HCT116 (cell line): ENCODE measurements at regions of chr2 and their contacts with region 1.

Region 1: GRCh38 chr2:88055371-88056128 is at the start of gene KRCC1:
- DNase-seq: peak; percentile 92
- ATAC-seq: peak; percentile 93
- H3K4me3 ChIP-seq: peak within 1 kb of the TSS; percentile 82 to 91
- H3K27ac ChIP-seq: peak within 1 kb of the TSS; percentile 92
- H3K4me1 ChIP-seq: peaks cover 7 to 21% of the 10 kb centered on the region in 2 experiments; a peak in 3 of 4 replicates
- H3K27me3 ChIP-seq: no peaks in the 10 kb centered on the region
- CTCF ChIP-seq: no peak
- POLR2A ChIP-seq: peak; percentile 88
- RAD21 ChIP-seq: no peak
- total RNA-seq, gene KRCC1: 5.8 TPM

Region 2: DNA sequence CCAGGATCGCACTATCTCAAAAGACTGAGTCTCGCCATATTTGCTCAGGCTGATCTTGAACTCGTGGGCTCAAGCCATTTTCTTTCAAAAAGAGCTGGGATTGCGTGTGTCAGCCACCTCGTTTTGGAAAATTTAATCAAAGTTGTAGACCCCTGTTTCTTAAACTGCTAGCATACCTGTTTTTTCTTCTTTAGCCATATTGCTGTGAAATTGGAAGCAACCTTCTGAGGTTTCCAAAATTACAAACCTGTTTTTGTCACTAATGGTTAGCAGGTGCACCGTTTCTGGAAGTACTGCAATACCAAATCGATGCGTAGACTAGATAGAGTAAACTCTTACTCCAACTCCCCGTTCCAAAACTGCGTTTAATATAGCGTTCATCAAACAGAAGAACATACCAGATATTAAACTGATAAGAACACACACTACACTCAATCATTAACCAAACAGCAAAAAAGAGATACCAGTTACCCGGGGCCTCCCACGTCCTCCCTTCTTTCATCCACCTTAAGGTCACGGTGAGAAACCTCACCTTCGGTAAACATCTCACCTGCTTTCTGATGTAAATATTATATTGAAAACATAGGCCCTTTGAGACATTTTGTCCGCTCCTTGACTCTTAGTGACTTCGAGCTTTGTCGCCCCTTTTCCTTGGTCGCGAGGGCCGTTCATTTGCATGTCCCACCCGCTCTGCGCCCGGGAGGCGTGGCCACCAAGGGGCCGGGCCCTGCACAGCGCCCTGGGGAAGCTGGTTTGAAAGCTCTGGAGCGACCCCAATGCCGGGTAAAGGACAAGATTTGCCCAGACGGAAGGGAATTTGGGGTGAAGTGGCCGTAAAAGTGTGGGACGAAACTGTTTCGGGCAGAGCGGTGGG is 39.2 kb before region 1 on chr2 and contains the start of gene RNU2-63P:
- CTCF ChIA-PET with region 1: interaction called, 3 read pairs
- POLR2A ChIA-PET with region 1: interaction called, 11 read pairs
- RAD21 ChIA-PET with region 1: no interaction called
- intact Hi-C with region 1: no loop called
- DNase-seq: peak; percentile 94
- ATAC-seq: peak; percentile 84
- H3K4me3 ChIP-seq: peak within 1 kb of the TSS; percentile 64 to 65
- H3K27ac ChIP-seq: peak within 1 kb of the TSS; percentile 74
- H3K4me1 ChIP-seq: peaks cover 0 to 18% of the 10 kb centered on the region in 2 experiments; a peak in 3 of 4 replicates
- H3K27me3 ChIP-seq: no peaks in the 10 kb centered on the region
- CTCF ChIP-seq: no peak
- POLR2A ChIP-seq: peak; percentile 100
- RAD21 ChIP-seq: no peak; the same call in 1 of the 2 replicates
- total RNA-seq, gene RNU2-63P: 7.4 TPM

Region 3: DNA sequence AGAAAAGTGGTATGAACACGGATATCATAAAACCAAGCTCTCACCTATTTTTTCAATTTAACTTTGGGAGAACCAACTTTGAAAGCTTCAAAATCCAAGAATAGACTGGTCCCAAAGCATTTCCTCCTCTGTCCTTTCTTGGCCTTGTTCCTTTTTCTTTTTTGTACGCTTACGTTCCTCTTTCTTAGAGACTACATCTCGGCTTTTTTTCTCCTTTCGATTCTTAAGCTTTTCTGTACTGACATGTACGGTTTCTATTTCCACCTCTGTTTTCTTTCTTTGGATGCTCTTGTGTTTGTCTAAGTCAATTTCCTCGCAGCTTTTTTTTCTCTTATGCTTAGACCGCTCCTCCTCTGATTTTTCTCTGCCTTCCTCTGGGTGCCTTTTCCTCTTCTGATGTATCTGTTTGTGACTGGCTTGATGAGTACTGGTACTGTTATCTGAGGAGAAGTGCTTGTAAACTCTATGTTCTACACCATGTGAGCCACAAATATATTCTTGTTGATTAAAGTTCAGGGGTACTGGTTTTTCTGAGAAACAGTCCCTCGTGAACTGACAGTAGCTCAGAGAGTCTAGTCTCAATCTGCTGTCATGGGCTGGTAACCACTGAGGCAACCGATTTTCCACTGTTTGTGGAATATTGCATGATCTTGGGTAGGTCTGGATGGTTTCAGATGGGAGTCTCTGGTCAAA is 27.7 kb before region 1 on chr2:
- CTCF ChIA-PET with region 1: no interaction called
- POLR2A ChIA-PET with region 1: no interaction called
- RAD21 ChIA-PET with region 1: no interaction called
- intact Hi-C with region 1: no loop called
- DNase-seq: no peak
- ATAC-seq: no peak
- H3K4me3 ChIP-seq: no peak overlapping the region
- H3K27ac ChIP-seq: no peak overlapping the region
- H3K4me1 ChIP-seq: no peaks in the 10 kb centered on the region
- H3K27me3 ChIP-seq: no peaks in the 10 kb centered on the region
- CTCF ChIP-seq: no peak
- POLR2A ChIP-seq: no peak
- RAD21 ChIP-seq: no peak

Region 4: DNA sequence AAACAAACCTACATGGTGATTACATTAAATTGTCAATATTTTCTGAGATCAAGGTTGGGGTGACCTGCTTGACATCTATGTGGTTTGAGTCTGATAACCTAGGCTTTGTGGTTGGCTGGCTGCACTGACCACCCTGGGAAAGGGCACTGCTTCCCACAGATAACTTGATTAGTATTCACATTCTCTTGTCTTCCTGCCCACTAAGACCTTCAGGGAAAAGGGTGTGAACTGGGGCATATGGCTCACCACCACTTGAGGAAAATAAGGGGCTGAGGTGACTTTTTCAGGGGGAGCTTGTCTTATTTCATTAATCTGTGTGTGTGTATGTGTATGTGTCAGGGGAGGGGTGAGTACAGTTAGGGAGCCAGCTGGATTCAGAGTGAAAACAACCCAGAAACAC is 13.6 kb after region 1 on chr2:
- CTCF ChIA-PET with region 1: interaction called, 11 read pairs
- POLR2A ChIA-PET with region 1: no interaction called
- RAD21 ChIA-PET with region 1: no interaction called
- intact Hi-C with region 1: no loop called
- DNase-seq: no peak
- ATAC-seq: no peak
- H3K4me3 ChIP-seq: no peak overlapping the region
- H3K27ac ChIP-seq: no peak overlapping the region
- H3K4me1 ChIP-seq: no peaks in the 10 kb centered on the region
- H3K27me3 ChIP-seq: no peaks in the 10 kb centered on the region
- CTCF ChIP-seq: no peak
- POLR2A ChIP-seq: no peak
- RAD21 ChIP-seq: no peak

Region 5: DNA sequence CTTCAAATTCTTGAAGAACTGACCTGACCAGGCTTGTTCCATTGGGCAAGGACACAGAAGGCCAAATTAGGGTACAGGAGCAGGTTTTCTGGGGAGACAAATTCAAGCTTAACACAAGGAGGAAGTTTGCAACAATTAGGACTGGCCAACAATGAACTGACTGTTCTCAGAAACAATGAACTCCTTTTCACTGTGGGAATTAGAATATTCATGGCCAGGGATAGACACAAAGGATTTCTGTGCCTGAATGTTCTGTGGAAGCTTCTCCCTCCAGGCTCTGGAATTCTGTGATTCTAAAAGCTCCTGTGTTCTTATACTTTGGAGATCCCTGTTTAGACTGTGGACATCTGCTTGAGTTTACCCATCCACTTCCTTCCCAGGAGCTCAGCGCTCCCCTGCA is 27.2 kb after region 1 on chr2:
- CTCF ChIA-PET with region 1: interaction called, 12 read pairs
- POLR2A ChIA-PET with region 1: no interaction called
- RAD21 ChIA-PET with region 1: no interaction called
- intact Hi-C with region 1: no loop called
- DNase-seq: no peak
- ATAC-seq: no peak
- H3K4me3 ChIP-seq: no peak overlapping the region
- H3K27ac ChIP-seq: no peak overlapping the region
- H3K4me1 ChIP-seq: peaks cover 0 to 5% of the 10 kb centered on the region in 2 experiments; a peak in 1 of 4 replicates
- H3K27me3 ChIP-seq: no peaks in the 10 kb centered on the region
- CTCF ChIP-seq: no peak
- POLR2A ChIP-seq: no peak
- RAD21 ChIP-seq: no peak

Region 6: GRCh38 chr2:88159955-88160415 is 104.4 kb after region 1 on chr2:
- CTCF ChIA-PET with region 1: interaction called, 113 read pairs
- POLR2A ChIA-PET with region 1: no interaction called
- RAD21 ChIA-PET with region 1: interaction called, 13 to 15 read pairs
- intact Hi-C with region 1: loop called (anchors 1 kb)
- DNase-seq: peak; percentile 52
- ATAC-seq: peak; percentile 91
- H3K4me3 ChIP-seq: no peak overlapping the region
- H3K27ac ChIP-seq: no peak overlapping the region
- H3K4me1 ChIP-seq: no peaks in the 10 kb centered on the region; a peak in 1 of 4 replicates
- H3K27me3 ChIP-seq: no peaks in the 10 kb centered on the region
- CTCF ChIP-seq: peak; percentile 74 to 89 (median 75)
- POLR2A ChIP-seq: no peak
- RAD21 ChIP-seq: peak; percentile 83

Region 7: GRCh38 chr2:88187038-88187676 is 131.6 kb after region 1 on chr2:
- CTCF ChIA-PET with region 1: interaction called, 19 read pairs
- POLR2A ChIA-PET with region 1: no interaction called
- RAD21 ChIA-PET with region 1: interaction called in 1 of 2 experiments, 3 read pairs
- intact Hi-C with region 1: loop called (anchors 1 kb)
- DNase-seq: peak; percentile 61
- ATAC-seq: peak; percentile 87
- H3K4me3 ChIP-seq: no peak overlapping the region
- H3K27ac ChIP-seq: no peak overlapping the region
- H3K4me1 ChIP-seq: peaks cover 0 to 7% of the 10 kb centered on the region in 2 experiments; a peak in 1 of 4 replicates
- H3K27me3 ChIP-seq: peaks cover 6% of the 10 kb centered on the region; the same call in 1 of the 2 replicates
- CTCF ChIP-seq: peak; percentile 81 to 93 (median 83)
- POLR2A ChIP-seq: no peak
- RAD21 ChIP-seq: peak; percentile 87

Region 8: GRCh38 chr2:88265349-88266303 is 210.1 kb after region 1 on chr2:
- CTCF ChIA-PET with region 1: no interaction called
- POLR2A ChIA-PET with region 1: no interaction called
- RAD21 ChIA-PET with region 1: no interaction called
- intact Hi-C with region 1: no loop called
- DNase-seq: peak; percentile 79
- ATAC-seq: peak; percentile 94
- H3K4me3 ChIP-seq: 0 out of 4 replicates have a peak overlapping the region, but pooled peaks of 1 of the 2 experiments have one; percentile 7
- H3K27ac ChIP-seq: no peak overlapping the region
- H3K4me1 ChIP-seq: peaks cover 7 to 12% of the 10 kb centered on the region in 2 experiments; a peak in 3 of 4 replicates
- H3K27me3 ChIP-seq: no peaks in the 10 kb centered on the region
- CTCF ChIP-seq: no peak
- POLR2A ChIP-seq: no peak
- RAD21 ChIP-seq: no peak

Region 9: DNA sequence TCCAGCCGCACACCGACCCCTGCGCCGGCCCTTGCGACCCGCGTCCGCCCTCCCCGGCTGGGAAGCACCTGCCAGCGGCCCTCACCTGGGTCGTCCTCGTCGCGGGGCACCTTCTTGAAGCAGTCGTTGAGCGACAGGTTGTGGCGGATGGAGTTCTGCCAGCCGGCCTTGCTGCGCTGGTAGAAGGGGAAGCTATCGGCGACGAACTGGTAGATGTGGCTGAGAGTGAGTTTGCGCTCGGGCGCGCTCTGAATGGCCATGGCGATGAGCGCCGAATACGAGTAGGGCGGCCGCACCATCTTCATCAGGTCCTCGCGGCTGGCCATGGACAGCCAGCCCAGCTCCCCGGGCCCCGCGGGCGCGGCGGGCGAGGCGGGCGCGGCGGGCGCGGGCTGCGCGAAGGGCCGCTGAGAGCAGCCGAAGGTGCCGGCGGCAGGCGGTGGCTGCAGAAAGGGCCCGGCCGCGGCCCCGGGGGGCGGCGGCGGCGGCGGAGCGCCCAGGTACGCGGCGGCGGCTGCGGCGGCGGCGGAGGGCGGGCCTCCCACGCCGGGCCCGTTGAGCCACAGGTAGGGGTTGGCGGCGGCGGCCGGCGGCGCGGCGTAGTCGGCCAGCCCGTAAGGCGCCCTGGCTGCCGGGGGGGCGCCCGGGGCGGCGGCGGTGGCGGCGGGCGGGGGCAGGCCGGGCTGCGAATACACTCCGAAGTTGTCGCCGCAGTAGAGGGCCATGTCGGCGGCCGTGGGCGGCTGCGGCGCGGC is 396.4 kb after region 1 on chr2:
- CTCF ChIA-PET with region 1: interaction called, 6 read pairs
- POLR2A ChIA-PET with region 1: no interaction called
- RAD21 ChIA-PET with region 1: no interaction called
- intact Hi-C with region 1: loop called (anchors 10 kb)
- DNase-seq: no peak
- ATAC-seq: no peak
- H3K4me3 ChIP-seq: no peak overlapping the region
- H3K27ac ChIP-seq: no peak overlapping the region
- H3K4me1 ChIP-seq: no peaks in the 10 kb centered on the region; a peak in 1 of 4 replicates
- H3K27me3 ChIP-seq: no peaks in the 10 kb centered on the region
- CTCF ChIP-seq: no peak
- POLR2A ChIP-seq: no peak
- RAD21 ChIP-seq: no peak

Region 10: GRCh38 chr2:88540346-88540745 is 484.8 kb after region 1 on chr2:
- CTCF ChIA-PET with region 1: no interaction called
- POLR2A ChIA-PET with region 1: no interaction called
- RAD21 ChIA-PET with region 1: no interaction called
- intact Hi-C with region 1: no loop called
- DNase-seq: no peak
- ATAC-seq: no peak
- H3K4me3 ChIP-seq: no peak overlapping the region
- H3K27ac ChIP-seq: no peak overlapping the region
- H3K4me1 ChIP-seq: peaks cover 0 to 24% of the 10 kb centered on the region in 2 experiments; a peak in 2 of 4 replicates
- H3K27me3 ChIP-seq: no peaks in the 10 kb centered on the region
- CTCF ChIP-seq: no peak
- POLR2A ChIP-seq: no peak
- RAD21 ChIP-seq: no peak

Region 11: GRCh38 chr2:88638743-88639142 is 583.2 kb after region 1 on chr2:
- CTCF ChIA-PET with region 1: no interaction called
- POLR2A ChIA-PET with region 1: no interaction called
- RAD21 ChIA-PET with region 1: no interaction called
- intact Hi-C with region 1: no loop called
- DNase-seq: no peak
- ATAC-seq: no peak
- H3K4me3 ChIP-seq: no peak overlapping the region
- H3K27ac ChIP-seq: no peak overlapping the region
- H3K4me1 ChIP-seq: peaks cover 12 to 15% of the 10 kb centered on the region in 2 experiments; a peak in 3 of 4 replicates
- H3K27me3 ChIP-seq: no peaks in the 10 kb centered on the region
- CTCF ChIP-seq: no peak
- POLR2A ChIP-seq: no peak
- RAD21 ChIP-seq: no peak